WTC11 (cell line): ENCODE measurements at regions of chr14 and their contacts with region 1.

Region 1: DNA sequence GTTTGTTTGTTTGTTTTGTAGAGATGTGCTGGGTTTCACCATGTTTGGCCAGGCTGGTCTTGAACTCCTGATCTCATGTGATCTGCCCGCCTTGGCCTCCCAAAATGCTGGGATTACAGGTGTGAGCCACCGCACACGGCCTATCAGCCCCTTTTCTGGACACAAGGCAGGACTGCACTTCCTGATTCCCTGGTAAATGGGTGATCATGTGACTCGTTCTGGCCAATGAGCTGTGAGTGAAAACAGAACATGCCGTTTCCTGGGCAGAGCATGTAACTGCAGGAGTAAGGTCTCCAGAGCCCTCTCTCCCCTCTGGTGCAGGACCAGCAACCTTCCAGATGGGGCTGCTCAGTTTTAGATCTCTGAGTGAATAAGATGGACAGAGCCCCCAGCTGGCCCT is 92.7 kb downstream of the ITPK1 start:
- DNase-seq: no peak
- ATAC-seq: peak; percentile 73
- H3K4me3 Mint-ChIP-seq: no peak overlapping the region
- H3K27ac Mint-ChIP-seq: no peak overlapping the region
- H3K4me1 Mint-ChIP-seq: peaks cover 67% of the 10 kb centered on the region
- H3K27me3 Mint-ChIP-seq: no peaks in the 10 kb centered on the region
- CTCF ChIP-seq: no peak

Region 2: DNA sequence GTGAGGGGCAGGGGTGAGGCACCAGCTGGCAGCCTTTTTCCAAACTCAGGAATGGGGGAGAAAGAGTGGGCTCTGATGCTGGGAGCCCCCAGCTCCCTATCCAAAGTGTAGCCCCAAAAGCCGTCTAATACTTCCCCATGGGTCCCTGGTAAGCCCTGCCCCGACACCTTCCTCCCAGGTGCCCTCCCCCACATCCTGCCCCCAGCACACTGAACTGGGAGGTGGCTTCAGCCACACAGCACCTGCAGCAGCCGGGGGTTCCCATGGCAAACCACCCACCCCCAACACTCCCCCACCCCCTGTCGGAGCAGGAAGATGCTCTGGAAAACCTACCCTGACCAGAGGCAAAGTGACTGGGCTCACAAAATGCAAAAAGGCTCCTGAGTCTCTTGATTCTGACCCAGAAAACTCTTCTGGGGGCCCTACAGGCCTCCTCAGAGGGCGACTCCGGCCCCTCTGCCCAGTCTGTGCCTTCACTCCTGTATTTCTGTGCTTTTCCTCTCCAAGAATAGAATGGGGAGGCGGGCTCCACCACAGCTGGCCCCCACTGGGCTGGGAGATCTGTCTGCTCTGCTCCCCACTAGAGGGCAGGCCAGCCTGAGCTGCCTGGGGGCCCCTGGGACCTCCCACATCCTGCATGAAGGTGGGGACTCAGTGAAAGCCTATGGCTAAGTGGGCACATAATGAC is 11.1 kb after region 1 on chr14:
- CTCF ChIA-PET with region 1: interaction called, 18 read pairs
- POLR2A ChIA-PET with region 1: no interaction called
- DNase-seq: peak; percentile 66
- ATAC-seq: peak; percentile 68
- H3K4me3 Mint-ChIP-seq: no peak overlapping the region
- H3K27ac Mint-ChIP-seq: peak overlapping the region; percentile 8; the same call in 1 of the 2 replicates
- H3K4me1 Mint-ChIP-seq: peaks cover 66% of the 10 kb centered on the region
- H3K27me3 Mint-ChIP-seq: no peaks in the 10 kb centered on the region
- CTCF ChIP-seq: peak; percentile 11; the same call in 1 of the 2 replicates

Region 3: GRCh38 chr14:93045965-93046704 is 23.1 kb after region 1 on chr14:
- CTCF ChIA-PET with region 1: no interaction called
- POLR2A ChIA-PET with region 1: no interaction called
- DNase-seq: no peak
- ATAC-seq: no peak
- H3K4me3 Mint-ChIP-seq: no peak overlapping the region
- H3K27ac Mint-ChIP-seq: peak overlapping the region; percentile 17; the same call in 1 of the 2 replicates
- H3K4me1 Mint-ChIP-seq: peaks cover 93% of the 10 kb centered on the region
- H3K27me3 Mint-ChIP-seq: no peaks in the 10 kb centered on the region
- CTCF ChIP-seq: no peak

Region 4: GRCh38 chr14:93059917-93060545 is 37.0 kb after region 1 on chr14:
- CTCF ChIA-PET with region 1: no interaction called
- POLR2A ChIA-PET with region 1: no interaction called
- DNase-seq: peak; percentile 42
- ATAC-seq: peak; percentile 63
- H3K4me3 Mint-ChIP-seq: no peak overlapping the region
- H3K27ac Mint-ChIP-seq: peak overlapping the region; percentile 90
- H3K4me1 Mint-ChIP-seq: peaks cover 63% of the 10 kb centered on the region
- H3K27me3 Mint-ChIP-seq: no peaks in the 10 kb centered on the region
- CTCF ChIP-seq: no peak